Activated CD4-positive, alpha-beta memory T cell treated with anti-CD3 and anti-CD28 coated beads for 36 hours (primary cell): ENCODE measurements at regions of chr2 and their contacts with region 1.

Region 1: DNA sequence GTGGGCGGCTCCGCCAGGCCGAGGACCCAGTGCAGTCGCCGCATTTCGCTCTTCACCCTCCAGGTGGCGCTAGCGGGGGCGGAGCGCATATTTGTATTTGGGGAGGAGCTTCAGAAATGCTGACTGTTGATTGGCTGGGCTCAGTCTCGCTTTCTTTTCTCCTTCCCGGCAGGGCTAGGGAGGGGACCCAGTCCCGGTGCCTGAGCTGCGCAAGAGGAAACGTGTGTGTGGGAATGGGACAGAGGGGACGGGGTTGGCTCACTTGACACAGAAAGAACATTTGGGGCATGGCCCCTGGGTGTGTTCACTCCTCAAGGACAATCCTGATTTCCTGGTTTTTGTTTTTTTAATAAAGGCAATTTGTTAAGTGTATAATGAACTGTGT is 20.3 kb upstream of the DNMT3A start:
- DNase-seq: peak; percentile 97
- H3K4me3 Mint-ChIP-seq: peak overlapping the region; percentile 77
- H3K27ac Mint-ChIP-seq: peak overlapping the region; percentile 93
- H3K4me1 Mint-ChIP-seq: peaks cover 15% of the 10 kb centered on the region
- H3K27me3 Mint-ChIP-seq: no peaks in the 10 kb centered on the region

Region 2: GRCh38 chr2:25276569-25277465 is 85.2 kb before region 1 on chr2:
- CTCF ChIA-PET with region 1: interaction called, 15 read pairs
- POLR2A ChIA-PET with region 1: interaction called, 3 read pairs
- intact Hi-C with region 1: no loop called
- DNase-seq: peak; percentile 88
- H3K4me3 Mint-ChIP-seq: peak overlapping the region; percentile 65
- H3K27ac Mint-ChIP-seq: peak overlapping the region; percentile 90
- H3K4me1 Mint-ChIP-seq: peaks cover 66% of the 10 kb centered on the region
- H3K27me3 Mint-ChIP-seq: no peaks in the 10 kb centered on the region

Region 3: GRCh38 chr2:25314514-25315315 is 47.3 kb before region 1 on chr2:
- CTCF ChIA-PET with region 1: interaction called, 37 read pairs
- POLR2A ChIA-PET with region 1: interaction called, 4 read pairs
- intact Hi-C with region 1: no loop called
- DNase-seq: peak; percentile 96
- H3K4me3 Mint-ChIP-seq: peak overlapping the region; percentile 90
- H3K27ac Mint-ChIP-seq: peak overlapping the region; percentile 95
- H3K4me1 Mint-ChIP-seq: peaks cover 61% of the 10 kb centered on the region
- H3K27me3 Mint-ChIP-seq: no peaks in the 10 kb centered on the region

Region 4: GRCh38 chr2:25342372-25343186 is 19.5 kb before region 1 on chr2:
- CTCF ChIA-PET with region 1: interaction called, 21 read pairs
- POLR2A ChIA-PET with region 1: interaction called, 7 read pairs
- intact Hi-C with region 1: loop called (anchors 1 kb)
- DNase-seq: peak; percentile 89
- H3K4me3 Mint-ChIP-seq: peak overlapping the region; percentile 70
- H3K27ac Mint-ChIP-seq: peak overlapping the region; percentile 77
- H3K4me1 Mint-ChIP-seq: peaks cover 38% of the 10 kb centered on the region
- H3K27me3 Mint-ChIP-seq: no peaks in the 10 kb centered on the region

Region 5: DNA sequence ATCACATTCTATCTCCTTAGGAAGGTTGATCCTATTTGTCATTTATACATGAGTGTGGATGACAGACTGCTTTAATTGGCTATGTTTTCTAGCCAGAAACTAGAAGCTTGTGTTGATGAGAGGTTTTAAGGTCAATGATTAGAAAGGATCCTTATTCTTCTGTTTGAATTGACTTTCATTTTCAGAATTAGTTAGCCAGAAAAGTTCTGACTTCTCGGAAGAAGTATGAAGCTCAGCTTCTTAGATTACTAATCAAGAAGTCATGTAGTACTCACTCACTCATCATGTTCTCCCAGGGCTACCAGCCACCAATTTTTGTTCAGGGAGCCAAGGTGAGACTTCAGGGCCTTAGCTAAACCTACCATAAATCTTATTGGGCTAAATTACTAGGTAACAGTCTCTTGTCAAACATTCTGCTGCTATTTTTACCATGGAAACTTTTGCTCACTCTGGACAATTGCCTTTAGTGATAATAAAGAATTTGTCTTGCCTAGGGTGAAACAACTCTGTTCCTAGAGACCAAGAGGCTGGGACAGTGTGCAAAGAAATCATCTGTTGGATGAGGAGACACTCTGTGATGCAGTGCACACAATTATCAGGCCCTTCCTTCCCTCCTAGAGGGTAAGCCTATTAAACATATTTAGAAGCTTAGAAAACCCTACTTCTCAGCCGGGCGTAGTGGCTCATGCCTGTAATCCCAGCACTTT is 91.3 kb after region 1 on chr2:
- CTCF ChIA-PET with region 1: interaction called, 22 read pairs
- POLR2A ChIA-PET with region 1: no interaction called
- intact Hi-C with region 1: loop called (anchors 1 kb)
- DNase-seq: peak; percentile 70
- H3K4me3 Mint-ChIP-seq: peak overlapping the region; percentile 5
- H3K27ac Mint-ChIP-seq: peak overlapping the region; percentile 93
- H3K4me1 Mint-ChIP-seq: peaks cover 26% of the 10 kb centered on the region
- H3K27me3 Mint-ChIP-seq: no peaks in the 10 kb centered on the region

Region 6: GRCh38 chr2:25567406-25567805 is 205.4 kb after region 1 on chr2:
- CTCF ChIA-PET with region 1: interaction called, 3 read pairs
- POLR2A ChIA-PET with region 1: no interaction called
- intact Hi-C with region 1: loop called (anchors 1 kb)
- DNase-seq: no peak
- H3K4me3 Mint-ChIP-seq: no peak overlapping the region
- H3K27ac Mint-ChIP-seq: no peak overlapping the region
- H3K4me1 Mint-ChIP-seq: no peaks in the 10 kb centered on the region
- H3K27me3 Mint-ChIP-seq: no peaks in the 10 kb centered on the region